ENCODE measurements at regions of chr3 and their contacts with region 1.

Region 1: GRCh38 chr3:99808151-99808794 is 9.4 kb upstream of the CMSS1 start:
- DNase-seq: peak; percentile 47
- ATAC-seq: peak; percentile 24
- H3K4me3 Mint-ChIP-seq: no peak overlapping the region
- H3K27ac Mint-ChIP-seq: no peak overlapping the region
- H3K4me1 Mint-ChIP-seq: no peaks in the 10 kb centered on the region
- H3K27me3 Mint-ChIP-seq: no peaks in the 10 kb centered on the region
- CTCF ChIP-seq: peak; percentile 84

Region 2: GRCh38 chr3:99789011-99789721 is 19.1 kb before region 1 on chr3:
- CTCF ChIA-PET with region 1: interaction called, 11 read pairs
- POLR2A ChIA-PET with region 1: no interaction called
- intact Hi-C with region 1: no loop called
- DNase-seq: peak; percentile 32
- ATAC-seq: peak; percentile 78
- H3K4me3 Mint-ChIP-seq: no peak overlapping the region
- H3K27ac Mint-ChIP-seq: no peak overlapping the region
- H3K4me1 Mint-ChIP-seq: no peaks in the 10 kb centered on the region
- H3K27me3 Mint-ChIP-seq: peaks cover 2% of the 10 kb centered on the region
- CTCF ChIP-seq: peak; percentile 64